Activated T-helper 1 cell treated with anti-CD3 and anti-CD28 coated beads, Interleukin-12 subunit alpha, Interleukin-12 subunit beta, Interleukin-2, Interleukin-4 antibody, amounts not matched to agents 30 ng/mL and 10 ng/mL and 1 ng/mL, durations not matched to agents 14 hours and 24 hours and 36 hours (primary cell): ENCODE measurements at regions of chrX and their contacts with region 1.

Region 1: DNA sequence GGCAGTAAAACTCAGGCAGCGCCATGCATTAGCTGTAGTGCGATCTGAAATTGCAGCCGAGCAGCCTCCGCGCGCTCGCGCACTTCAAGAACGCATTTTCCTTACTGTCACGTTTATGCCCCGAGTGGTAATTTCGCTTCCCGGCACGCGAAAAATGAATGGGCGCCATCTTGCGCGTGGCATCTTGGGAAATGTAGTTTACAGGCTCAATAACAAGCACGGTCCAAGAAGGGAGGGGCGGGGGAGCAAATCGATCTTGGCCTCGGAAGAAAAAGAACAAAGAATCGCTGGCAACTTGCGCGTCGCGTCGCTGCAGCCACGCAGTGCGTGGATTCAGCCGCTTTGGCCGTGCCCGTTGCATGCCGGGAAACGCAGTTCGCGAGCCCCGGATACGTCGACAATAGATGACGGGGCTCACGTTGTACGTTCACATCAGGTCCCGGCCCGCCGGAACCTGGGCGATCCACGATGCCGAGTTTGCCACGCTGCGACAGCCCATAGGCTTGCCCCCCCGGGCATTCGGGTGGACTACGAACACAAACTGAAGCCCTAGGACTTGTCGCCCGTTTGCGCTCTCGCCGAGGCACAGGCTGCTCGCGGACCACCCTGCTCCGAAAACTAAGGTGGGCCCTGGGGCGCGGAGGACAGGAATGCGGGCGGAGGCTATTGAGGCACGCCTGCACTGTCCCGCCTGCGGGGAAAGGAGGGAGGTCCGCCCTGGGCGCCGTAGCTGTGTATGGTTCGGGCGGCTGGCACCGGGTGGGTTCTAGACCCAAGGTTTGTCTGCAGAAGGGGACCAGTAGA is at the start of gene FTSJ1:
- DNase-seq: peak; percentile 86
- H3K4me3 Mint-ChIP-seq: peak within 1 kb of the TSS; percentile 98
- H3K27ac Mint-ChIP-seq: peak within 1 kb of the TSS; percentile 90
- H3K4me1 Mint-ChIP-seq: peaks cover 20% of the 10 kb centered on the region
- H3K27me3 Mint-ChIP-seq: peaks cover 2% of the 10 kb centered on the region
- total RNA-seq, gene FTSJ1: 96.2 and 103 TPM in 2 replicates

Region 2: DNA sequence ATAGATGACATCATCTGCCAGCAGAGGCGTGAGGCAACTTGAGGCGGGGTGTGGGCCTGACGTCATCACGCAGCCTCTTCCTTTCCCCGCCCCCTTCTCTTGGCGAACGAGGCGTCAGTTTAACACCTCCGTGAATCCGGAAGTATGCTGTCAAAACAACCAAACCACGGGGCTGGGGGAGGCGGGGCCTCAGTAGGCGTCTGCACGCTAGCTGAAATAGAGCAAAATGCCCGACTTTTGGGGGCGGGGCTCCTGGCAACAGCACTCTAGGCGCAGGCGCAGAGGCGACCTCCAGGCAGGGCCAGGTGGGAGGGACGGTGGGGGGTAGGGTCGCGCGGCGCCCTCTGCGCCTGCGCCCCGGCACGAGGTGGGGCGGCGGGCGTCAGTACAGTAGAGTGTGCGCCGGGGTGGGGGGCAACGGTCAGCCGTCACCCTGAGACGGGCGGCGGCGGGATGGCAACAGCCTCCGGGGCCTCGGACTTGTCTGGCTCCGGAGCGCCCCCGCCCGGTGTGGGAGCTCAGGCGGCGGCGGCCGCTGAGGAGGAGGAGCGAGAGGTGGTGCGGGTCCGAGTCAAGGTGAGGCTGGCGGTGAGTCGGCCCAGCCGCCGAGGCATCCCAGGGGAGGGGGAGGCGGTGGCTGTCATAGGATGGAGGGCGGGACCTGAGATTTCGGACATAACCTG is 63.5 kb after region 1 on chrX and contains the start of gene TBC1D25:
- intact Hi-C with region 1: loop called (anchors 1 kb)
- DNase-seq: peak; percentile 93
- H3K4me3 Mint-ChIP-seq: peak within 1 kb of the TSS; percentile 94
- H3K27ac Mint-ChIP-seq: peak within 1 kb of the TSS; percentile 92
- H3K4me1 Mint-ChIP-seq: peaks cover 17% of the 10 kb centered on the region
- H3K27me3 Mint-ChIP-seq: no peaks in the 10 kb centered on the region
- total RNA-seq, gene TBC1D25: 13.5 and 16.0 TPM in 2 replicates

Region 3: DNA sequence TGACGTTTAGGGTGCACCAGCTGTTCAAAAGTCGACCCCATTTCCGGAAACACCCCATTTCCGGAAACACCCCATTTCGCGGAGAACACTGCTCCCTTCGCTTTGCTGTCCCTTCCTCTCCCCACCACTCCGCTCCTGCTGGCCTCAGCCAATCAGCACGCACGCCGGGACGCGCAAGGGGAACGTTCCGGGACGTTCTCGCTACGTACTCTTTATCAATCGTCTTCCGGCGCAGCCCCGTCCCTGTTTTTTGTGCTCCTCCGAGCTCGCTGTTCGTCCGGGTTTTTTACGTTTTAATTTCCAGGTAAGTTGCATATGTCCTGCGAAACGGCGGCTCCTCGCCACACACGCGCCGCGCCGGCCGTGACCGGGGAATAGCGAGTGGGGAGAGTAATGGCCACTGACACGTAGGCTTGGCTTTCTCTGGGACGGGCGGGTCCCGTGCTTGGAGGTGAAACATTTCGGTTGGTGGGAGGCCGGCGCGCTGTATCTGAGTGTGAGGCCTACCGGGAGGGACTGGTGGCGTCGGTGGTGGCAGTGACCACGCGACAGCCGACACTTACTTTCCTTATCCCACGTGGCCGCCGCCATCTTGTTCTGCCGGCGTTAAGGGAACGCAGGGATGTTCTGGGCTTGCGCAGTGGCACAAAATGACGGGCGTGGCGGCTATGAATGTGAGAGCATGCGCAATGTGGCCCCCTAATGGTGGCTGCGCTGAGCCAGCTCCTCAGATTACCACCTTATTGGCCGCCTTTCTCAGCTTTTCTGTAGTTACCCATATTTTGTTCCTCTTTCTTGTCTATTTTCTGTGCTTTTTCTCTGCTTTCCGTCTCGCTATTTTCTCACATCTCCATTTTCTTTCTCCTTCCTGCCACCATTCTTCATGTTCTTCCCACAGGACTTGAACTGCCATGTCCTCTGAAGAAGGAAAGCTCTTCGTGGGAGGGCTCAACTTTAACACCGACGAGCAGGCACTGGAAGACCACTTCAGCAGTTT is 98.6 kb after region 1 on chrX and contains the start of gene RBM3:
- intact Hi-C with region 1: loop called (anchors 1 kb)
- DNase-seq: peak; percentile 89
- H3K4me3 Mint-ChIP-seq: peak within 1 kb of the TSS; percentile 99
- H3K27ac Mint-ChIP-seq: peak within 1 kb of the TSS; percentile 100
- H3K4me1 Mint-ChIP-seq: peaks cover 19% of the 10 kb centered on the region
- H3K27me3 Mint-ChIP-seq: no peaks in the 10 kb centered on the region
- total RNA-seq, gene RBM3: 318 and 338 TPM in 2 replicates

Region 4: DNA sequence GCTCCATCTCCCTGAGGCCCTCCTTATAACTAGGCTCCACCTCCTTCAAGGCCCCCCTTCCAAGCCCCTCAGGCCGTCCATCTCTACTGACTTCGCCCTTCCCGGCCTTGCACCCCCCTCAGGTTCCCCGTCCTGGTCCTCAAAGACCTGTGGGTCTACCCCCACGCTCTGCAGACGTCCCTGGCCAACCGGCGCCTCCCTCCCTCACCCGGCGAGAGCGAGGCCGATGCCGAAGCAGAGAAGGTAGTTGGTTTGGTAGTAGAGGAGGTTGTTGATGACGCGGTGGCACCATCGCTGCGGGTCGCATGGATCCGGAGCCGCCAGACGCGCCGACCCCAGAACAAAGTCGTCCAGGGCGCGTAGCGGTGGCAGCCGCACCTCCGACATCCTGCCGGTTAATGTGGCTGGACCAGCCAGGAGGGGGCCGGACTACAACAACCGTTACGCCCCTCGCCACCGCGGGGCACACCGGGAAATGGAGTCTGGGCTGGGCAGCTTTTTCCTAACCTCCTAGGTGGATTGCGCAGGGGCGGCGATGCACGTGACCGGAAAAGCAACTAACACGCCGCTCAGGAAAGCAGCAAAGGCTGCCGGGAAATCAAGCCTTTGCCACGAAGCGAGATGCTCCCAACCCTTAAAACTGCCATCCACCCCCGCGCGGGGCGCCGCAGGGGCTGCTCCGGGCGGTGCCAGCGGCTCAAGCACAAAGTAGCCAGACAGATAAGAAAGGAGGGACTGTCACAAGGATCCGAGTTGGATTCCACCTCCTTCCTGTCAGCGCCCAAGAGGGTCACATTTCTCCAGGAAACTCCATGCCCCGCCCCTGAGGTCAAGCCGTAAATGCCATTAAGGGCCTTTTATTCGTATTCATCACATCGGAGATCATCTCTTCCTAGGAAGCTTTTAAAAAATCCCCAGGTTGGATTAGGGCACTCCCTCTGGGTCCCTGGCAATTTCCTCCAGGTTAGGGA is 597.9 kb after region 1 on chrX and contains the start of gene PRAF2:
- intact Hi-C with region 1: loop called (anchors 5 kb)
- DNase-seq: peak; percentile 84
- H3K4me3 Mint-ChIP-seq: peak within 1 kb of the TSS; percentile 84
- H3K27ac Mint-ChIP-seq: peak within 1 kb of the TSS; percentile 74
- H3K4me1 Mint-ChIP-seq: peaks cover 12% of the 10 kb centered on the region
- H3K27me3 Mint-ChIP-seq: no peaks in the 10 kb centered on the region
- total RNA-seq, gene PRAF2: 14.9 and 15.4 TPM in 2 replicates